ENCODE measurements at regions of chr22 and their contacts with region 1.

Region 1: GRCh38 chr22:41237707-41238569 is 2.8 kb downstream of the CHADL start:
- DNase-seq: peak; percentile 95
- H3K4me3 Mint-ChIP-seq: peak overlapping the region; percentile 76
- H3K27ac Mint-ChIP-seq: no peak overlapping the region
- H3K4me1 Mint-ChIP-seq: peaks cover 5% of the 10 kb centered on the region
- H3K27me3 Mint-ChIP-seq: peaks cover 2% of the 10 kb centered on the region

Region 2: DNA sequence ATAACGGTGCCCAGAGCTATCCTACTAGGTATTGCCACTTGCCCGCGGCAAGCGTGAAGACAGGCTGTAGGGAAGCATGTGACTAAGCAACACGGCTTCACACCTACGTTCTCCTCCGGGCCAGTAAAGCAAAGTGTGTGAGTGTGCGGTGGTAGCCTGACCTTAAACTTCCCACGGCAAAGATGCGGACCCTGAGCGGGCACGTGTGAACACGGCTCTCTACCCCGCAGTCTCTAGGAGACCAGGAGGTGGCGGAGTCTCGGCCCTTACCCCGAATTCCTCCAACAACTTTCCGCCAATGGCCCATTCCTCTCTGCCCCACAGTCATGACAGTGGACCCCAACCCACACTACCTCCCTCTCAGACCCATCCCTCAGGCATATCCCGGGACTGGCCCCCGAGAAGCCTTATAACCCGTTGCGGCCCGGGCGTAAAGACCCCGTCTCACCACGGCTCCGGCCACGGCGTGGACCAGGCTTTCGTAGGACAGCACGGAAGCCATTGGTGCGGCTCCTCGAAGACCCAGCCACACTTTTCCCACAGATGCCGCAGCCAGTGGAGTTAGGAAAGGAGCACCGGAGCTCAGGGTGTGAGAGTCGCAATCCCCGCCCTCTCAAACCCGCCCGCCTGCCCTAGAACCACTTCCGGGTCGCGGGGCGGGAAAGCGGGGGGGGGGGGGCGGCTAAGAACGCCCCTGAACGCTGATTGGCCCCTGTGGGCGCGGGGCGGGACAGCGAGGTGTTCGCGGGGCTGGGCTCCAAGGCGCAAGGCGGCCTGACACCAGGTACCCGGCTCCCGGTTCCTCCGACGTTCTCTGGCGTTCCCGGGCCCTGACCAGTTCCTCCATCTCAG is 419.0 kb before region 1 on chr22 and contains the start of gene SLC25A17:
- intact Hi-C with region 1: no loop called
- DNase-seq: peak; percentile 96
- H3K4me3 Mint-ChIP-seq: peak within 1 kb of the TSS; percentile 92
- H3K27ac Mint-ChIP-seq: peak within 1 kb of the TSS; percentile 94
- H3K4me1 Mint-ChIP-seq: peaks cover 30% of the 10 kb centered on the region
- H3K27me3 Mint-ChIP-seq: no peaks in the 10 kb centered on the region
- total RNA-seq, gene SLC25A17: 32.8 and 37.7 TPM in 2 replicates

Region 3: DNA sequence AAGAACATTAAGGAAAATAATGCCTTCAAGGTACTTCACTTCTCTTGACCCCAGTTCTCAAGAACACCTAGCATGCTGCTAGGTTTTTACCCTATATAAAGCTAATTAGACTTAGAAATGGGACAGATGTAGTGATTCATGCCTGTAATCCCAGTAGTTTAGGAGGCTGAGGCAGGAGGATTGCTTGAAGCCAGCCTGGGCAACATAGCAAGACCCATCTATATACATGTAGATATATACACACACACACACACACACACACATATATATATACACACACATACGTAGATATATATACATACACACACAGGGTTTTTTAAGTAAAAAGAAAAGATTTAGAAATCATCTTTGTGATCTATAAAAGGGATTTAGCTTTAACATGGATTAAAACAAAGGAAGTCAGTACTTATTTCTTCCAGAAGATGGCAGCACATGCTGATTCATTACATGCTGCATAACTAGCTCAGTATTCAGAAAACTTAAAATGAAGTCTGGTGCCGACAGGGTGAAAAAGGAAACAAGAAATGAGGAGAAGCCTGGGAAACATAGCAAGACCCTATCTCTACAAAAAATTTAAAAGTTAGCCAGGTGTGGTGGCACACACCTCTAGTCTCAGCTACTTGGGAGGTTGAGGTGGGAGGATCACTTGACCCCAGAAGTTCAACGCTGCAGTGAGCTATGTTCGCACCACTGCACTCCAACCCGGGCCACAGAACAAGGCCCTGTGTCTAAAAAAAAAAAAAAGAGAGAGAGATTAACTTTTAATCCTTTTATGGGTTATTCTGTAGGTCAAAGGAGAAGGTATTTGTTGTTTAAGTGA is 315.2 kb before region 1 on chr22:
- intact Hi-C with region 1: loop called (anchors 2 kb)
- DNase-seq: peak; percentile 83
- H3K4me3 Mint-ChIP-seq: peak overlapping the region; percentile 14
- H3K27ac Mint-ChIP-seq: peak overlapping the region; percentile 42
- H3K4me1 Mint-ChIP-seq: peaks cover 4% of the 10 kb centered on the region
- H3K27me3 Mint-ChIP-seq: no peaks in the 10 kb centered on the region

Region 4: GRCh38 chr22:41603873-41604332 is 366.0 kb after region 1 on chr22:
- intact Hi-C with region 1: no loop called
- DNase-seq: peak; percentile 89
- H3K4me3 Mint-ChIP-seq: no peak overlapping the region
- H3K27ac Mint-ChIP-seq: peak overlapping the region; percentile 74
- H3K4me1 Mint-ChIP-seq: peaks cover 32% of the 10 kb centered on the region
- H3K27me3 Mint-ChIP-seq: peaks cover 5% of the 10 kb centered on the region

Measured in activated CD4-positive, alpha-beta T cell treated with anti-CD3 and anti-CD28 coated beads, Interleukin-2, amount 10 ng/mL, durations not matched to agents 24 days and 14 days (primary cell).